Naive thymus-derived CD4-positive, alpha-beta T cell (primary cell): ENCODE measurements at regions of chr9 and their contacts with region 1.

Region 1: DNA sequence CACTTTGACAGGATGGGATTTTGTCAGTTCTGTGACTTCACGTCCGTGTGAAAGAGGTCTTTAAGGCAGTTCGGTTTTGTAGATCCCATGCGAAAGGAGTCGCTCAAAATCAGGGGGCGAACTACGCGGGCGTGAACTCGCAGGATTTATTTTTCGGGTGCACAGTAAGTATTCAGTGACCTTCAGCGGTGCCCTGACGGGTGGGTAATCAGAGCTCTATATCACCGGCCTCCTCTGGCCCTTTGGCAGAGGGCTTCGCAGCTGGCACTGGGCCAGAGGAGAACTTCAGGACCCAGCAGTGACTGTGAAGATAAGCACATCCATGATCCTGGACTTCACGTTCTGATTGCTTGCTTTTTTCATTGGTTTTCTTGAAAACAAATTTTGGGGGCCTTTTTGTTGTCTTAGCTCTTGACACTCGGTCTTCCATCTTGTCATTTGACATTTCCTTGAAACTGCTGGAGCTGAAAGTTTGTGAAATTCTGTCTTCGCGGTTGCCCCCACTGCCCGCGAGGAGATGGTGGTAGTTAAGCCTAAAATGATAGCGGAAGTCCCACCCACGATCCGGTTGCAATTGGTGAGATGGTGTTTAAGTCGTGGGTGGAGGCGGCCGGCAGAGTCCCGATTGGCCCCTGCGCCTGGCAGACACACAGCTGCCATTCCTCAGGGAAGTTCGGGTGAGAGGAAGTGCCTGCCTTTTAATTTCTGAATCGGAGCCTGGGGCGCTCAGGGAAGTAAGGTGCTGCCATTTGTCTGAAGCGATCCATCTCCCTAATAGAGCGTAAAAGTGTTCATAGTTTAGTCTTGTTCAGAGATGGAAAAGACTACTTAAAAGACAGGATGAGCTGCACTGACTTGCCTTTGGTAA is at the start of gene FAM120AOS:
- DNase-seq: peak; percentile 50 to 85 (median 76)
- ATAC-seq: peak; percentile 82
- H3K4me3 ChIP-seq: peak within 1 kb of the TSS; percentile 72
- H3K4me3 Mint-ChIP-seq: peak within 1 kb of the TSS; percentile 89 to 100 (median 95)
- H3K27ac ChIP-seq: peak within 1 kb of the TSS; percentile 87
- H3K27ac Mint-ChIP-seq: peak within 1 kb of the TSS; percentile 83 to 96 (median 94)
- H3K4me1 ChIP-seq: peaks cover 31 to 50% of the 10 kb centered on the region in 2 donors
- H3K4me1 Mint-ChIP-seq: peaks cover 39 to 69% (median 57%) of the 10 kb centered on the region in 7 donors
- H3K27me3 ChIP-seq: no peaks in the 10 kb centered on the region
- H3K27me3 Mint-ChIP-seq: no peaks in the 10 kb centered on the region
- total RNA-seq, gene FAM120AOS: 36.7 to 49.5 (median 42.3) TPM

Region 2: GRCh38 chr9:92115071-92115858 is 1338.0 kb before region 1 on chr9 and contains the start of gene SPTLC1:
- CTCF ChIA-PET with region 1: no interaction called
- POLR2A ChIA-PET with region 1: interaction called, 4 read pairs
- intact Hi-C with region 1: loop called in 1 of 2 experiments (anchors 1 kb)
- DNase-seq: peak; percentile 89 to 97 (median 94)
- ATAC-seq: peak; percentile 99
- H3K4me3 ChIP-seq: peak within 1 kb of the TSS; percentile 85
- H3K4me3 Mint-ChIP-seq: peak within 1 kb of the TSS; percentile 91 to 99 (median 97)
- H3K27ac ChIP-seq: peak within 1 kb of the TSS; percentile 96
- H3K27ac Mint-ChIP-seq: peak within 1 kb of the TSS; percentile 96 to 100 (median 98)
- H3K4me1 ChIP-seq: peaks cover 17 to 20% of the 10 kb centered on the region in 2 donors
- H3K4me1 Mint-ChIP-seq: peaks cover 17 to 51% (median 42%) of the 10 kb centered on the region in 7 donors
- H3K27me3 ChIP-seq: no peaks in the 10 kb centered on the region
- H3K27me3 Mint-ChIP-seq: peaks cover 0 to 2% (median 0%) of the 10 kb centered on the region in 5 donors
- total RNA-seq, gene SPTLC1: 45.6 to 64.0 (median 51.0) TPM

Region 3: GRCh38 chr9:92669890-92670708 is 783.2 kb before region 1 on chr9 and contains the start of gene IPPK:
- CTCF ChIA-PET with region 1: no interaction called
- POLR2A ChIA-PET with region 1: interaction called, 4 read pairs
- intact Hi-C with region 1: loop called in 1 of 2 experiments (anchors 2 kb)
- DNase-seq: peak; percentile 92 to 99 (median 96)
- ATAC-seq: peak; percentile 98
- H3K4me3 ChIP-seq: peak within 1 kb of the TSS; percentile 100
- H3K4me3 Mint-ChIP-seq: peak within 1 kb of the TSS; percentile 83 to 98 (median 95)
- H3K27ac ChIP-seq: peak within 1 kb of the TSS; percentile 91
- H3K27ac Mint-ChIP-seq: peak within 1 kb of the TSS; percentile 90 to 98 (median 95)
- H3K4me1 ChIP-seq: peaks cover 16 to 23% of the 10 kb centered on the region in 2 donors
- H3K4me1 Mint-ChIP-seq: peaks cover 27 to 46% (median 36%) of the 10 kb centered on the region in 7 donors
- H3K27me3 ChIP-seq: no peaks in the 10 kb centered on the region
- H3K27me3 Mint-ChIP-seq: no peaks in the 10 kb centered on the region
- total RNA-seq, gene IPPK: 5.9 to 12.8 (median 7.4) TPM

Region 4: GRCh38 chr9:93064392-93065134 is 388.7 kb before region 1 on chr9:
- CTCF ChIA-PET with region 1: no interaction called
- POLR2A ChIA-PET with region 1: no interaction called
- intact Hi-C with region 1: loop called in 1 of 2 experiments (anchors 2 kb)
- DNase-seq: peak; percentile 54 to 95 (median 90)
- ATAC-seq: peak; percentile 96
- H3K4me3 ChIP-seq: peak overlapping the region; percentile 90
- H3K4me3 Mint-ChIP-seq: peak overlapping the region; percentile 87 to 97 (median 92)
- H3K27ac ChIP-seq: peak overlapping the region; percentile 88
- H3K27ac Mint-ChIP-seq: peak overlapping the region; percentile 97 to 100 (median 99)
- H3K4me1 ChIP-seq: peaks cover 63 to 87% of the 10 kb centered on the region in 2 donors
- H3K4me1 Mint-ChIP-seq: peaks cover 71 to 95% (median 86%) of the 10 kb centered on the region in 7 donors
- H3K27me3 ChIP-seq: no peaks in the 10 kb centered on the region
- H3K27me3 Mint-ChIP-seq: no peaks in the 10 kb centered on the region

Region 5: GRCh38 chr9:93380410-93381056 is 72.7 kb before region 1 on chr9:
- CTCF ChIA-PET with region 1: no interaction called
- POLR2A ChIA-PET with region 1: no interaction called
- intact Hi-C with region 1: no loop called
- DNase-seq: no peak
- ATAC-seq: no peak
- H3K4me3 ChIP-seq: no peak overlapping the region
- H3K4me3 Mint-ChIP-seq: no peak overlapping the region
- H3K27ac ChIP-seq: no peak overlapping the region
- H3K27ac Mint-ChIP-seq: no peak overlapping the region
- H3K4me1 ChIP-seq: no peaks in the 10 kb centered on the region
- H3K4me1 Mint-ChIP-seq: peaks cover 0 to 4% (median 0%) of the 10 kb centered on the region in 7 donors
- H3K27me3 ChIP-seq: peaks cover 0 to 3% of the 10 kb centered on the region in 2 donors
- H3K27me3 Mint-ChIP-seq: peaks cover 10 to 51% (median 26%) of the 10 kb centered on the region in 5 donors

Region 6: DNA sequence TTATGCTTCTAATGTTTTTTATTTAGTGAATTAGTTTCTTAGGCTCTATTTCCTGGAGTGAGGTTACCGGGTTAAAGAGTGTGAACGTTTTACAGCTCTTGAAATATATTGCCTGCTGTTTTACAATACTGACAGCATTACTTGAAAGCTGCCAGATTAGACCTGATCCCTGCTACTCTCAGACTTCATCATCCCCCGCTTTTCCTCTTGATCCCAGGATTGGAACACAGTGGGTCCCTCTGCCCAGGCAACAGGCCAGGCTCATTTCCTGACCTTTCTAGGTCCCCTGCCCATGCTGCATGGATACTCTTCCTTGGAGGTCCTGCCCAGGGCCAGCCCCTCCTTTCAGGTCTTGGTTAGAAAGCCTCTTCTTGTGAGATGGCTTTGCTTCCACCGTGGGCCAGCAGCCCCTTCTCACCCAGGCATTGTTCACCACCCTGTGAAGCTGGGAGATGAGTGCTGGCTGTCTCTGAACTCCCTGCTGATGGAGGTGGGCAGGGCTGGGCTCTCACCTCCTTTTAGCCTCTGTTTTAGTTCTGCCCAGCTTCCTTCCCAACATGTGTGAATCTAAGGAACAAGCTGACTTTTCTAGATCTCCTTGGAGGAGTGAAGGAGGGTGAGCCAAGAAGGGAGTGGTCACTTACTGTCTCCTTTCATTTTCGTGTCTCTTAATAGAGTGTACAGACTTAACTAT is 15.6 kb after region 1 on chr9:
- CTCF ChIA-PET with region 1: interaction called, 4 read pairs
- POLR2A ChIA-PET with region 1: interaction called, 13 read pairs
- intact Hi-C with region 1: no loop called
- DNase-seq: no peak
- ATAC-seq: no peak
- H3K4me3 ChIP-seq: no peak overlapping the region
- H3K4me3 Mint-ChIP-seq: peak overlapping the region in 7 of 10 donors; percentile 25 to 74 (median 60)
- H3K27ac ChIP-seq: no peak overlapping the region
- H3K27ac Mint-ChIP-seq: peak overlapping the region in 4 of 9 donors; percentile 7 to 66 (median 51)
- H3K4me1 ChIP-seq: peaks cover 29 to 40% of the 10 kb centered on the region in 2 donors
- H3K4me1 Mint-ChIP-seq: peaks cover 66 to 79% (median 72%) of the 10 kb centered on the region in 7 donors
- H3K27me3 ChIP-seq: no peaks in the 10 kb centered on the region
- H3K27me3 Mint-ChIP-seq: no peaks in the 10 kb centered on the region

Region 7: DNA sequence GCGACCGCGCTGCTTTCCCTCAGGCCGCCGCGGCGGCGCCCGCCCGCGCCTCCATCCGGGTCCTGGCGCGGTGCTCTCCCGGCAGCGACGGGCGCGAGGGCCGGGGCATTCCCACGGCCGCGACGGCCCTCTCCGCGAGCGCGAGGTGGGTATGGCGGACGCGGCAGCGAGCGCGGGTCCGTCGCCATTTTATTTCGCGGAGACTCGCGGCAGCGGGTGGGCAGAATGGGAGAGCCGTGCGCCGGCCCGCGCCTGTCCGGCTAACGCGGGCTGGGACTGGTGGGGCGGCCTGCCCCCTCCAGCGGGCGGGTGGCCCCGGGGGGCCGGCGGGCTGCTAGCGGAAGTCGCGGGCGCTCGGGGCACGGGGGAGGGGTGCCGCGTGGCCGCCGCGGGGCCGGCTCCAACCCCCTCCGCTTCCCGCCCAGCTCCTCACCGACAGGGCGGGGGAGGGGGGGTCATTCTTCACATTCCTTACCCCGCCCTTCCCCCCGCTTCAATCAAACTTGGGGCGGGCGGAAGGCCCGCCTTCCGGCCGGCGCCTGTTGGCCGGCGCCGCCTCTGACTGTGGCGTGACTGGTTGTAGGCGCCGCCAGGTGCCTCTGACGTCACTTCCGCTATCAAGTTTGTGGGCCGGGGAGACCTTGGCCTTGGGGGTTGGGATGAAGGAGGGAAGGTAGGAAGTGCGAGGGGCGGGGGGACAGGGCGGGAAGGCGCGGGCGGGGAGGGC is 713.1 kb after region 1 on chr9:
- CTCF ChIA-PET with region 1: no interaction called
- POLR2A ChIA-PET with region 1: no interaction called
- intact Hi-C with region 1: loop called (anchors 2 kb)
- DNase-seq: peak; percentile 81 to 96 (median 92)
- ATAC-seq: peak; percentile 72
- H3K4me3 ChIP-seq: peak overlapping the region; percentile 82
- H3K4me3 Mint-ChIP-seq: peak overlapping the region; percentile 84 to 96 (median 88)
- H3K27ac ChIP-seq: peak overlapping the region; percentile 100
- H3K27ac Mint-ChIP-seq: peak overlapping the region; percentile 79 to 97 (median 91)
- H3K4me1 ChIP-seq: peaks cover 37 to 38% of the 10 kb centered on the region in 2 donors
- H3K4me1 Mint-ChIP-seq: peaks cover 33 to 61% (median 58%) of the 10 kb centered on the region in 7 donors
- H3K27me3 ChIP-seq: no peaks in the 10 kb centered on the region
- H3K27me3 Mint-ChIP-seq: no peaks in the 10 kb centered on the region